K562 (cell line): ENCODE measurements at regions of chr1 and their contacts with region 1.

Region 1: DNA sequence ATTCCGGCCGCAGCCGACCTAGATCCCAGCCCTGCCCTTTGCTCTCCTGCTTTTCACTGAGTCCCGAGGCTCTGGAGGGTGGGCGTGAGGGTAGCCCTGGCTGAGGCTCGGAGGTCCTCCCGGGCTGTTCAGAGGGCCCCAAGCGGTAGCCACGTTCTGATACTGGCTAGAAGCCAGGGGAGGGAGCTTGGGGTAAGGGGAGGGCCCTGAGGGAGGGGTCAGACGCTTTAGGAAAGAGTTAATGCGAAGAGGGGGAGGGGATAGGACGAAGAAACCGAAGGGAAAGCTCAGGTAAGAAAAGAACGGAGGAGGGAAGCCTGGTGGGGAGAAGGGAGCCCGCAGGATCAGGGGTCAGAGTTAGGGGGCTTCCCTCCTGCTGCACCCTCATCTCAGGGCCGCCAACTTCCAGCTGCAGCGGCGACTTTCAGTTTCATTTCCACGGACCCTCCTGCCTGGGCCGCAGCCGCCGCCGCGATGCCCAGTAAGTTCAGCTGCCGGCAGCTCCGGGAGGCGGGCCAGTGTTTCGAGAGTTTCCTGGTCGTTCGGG is at the start of gene MOV10:
- DNase-seq: peak; percentile 85 to 92 (median 90)
- ATAC-seq: peak; percentile 79
- H3K4me3 ChIP-seq: peak within 1 kb of the TSS; percentile 71
- H3K27ac ChIP-seq: peak within 1 kb of the TSS; percentile 86
- H3K4me1 ChIP-seq: peaks cover 18 to 42% of the 10 kb centered on the region in 2 experiments
- H3K27me3 ChIP-seq: no peaks in the 10 kb centered on the region
- CTCF ChIP-seq: no peak
- EP300 ChIP-seq: no peak
- POLR2A ChIP-seq: peak; percentile 87
- RAD21 ChIP-seq: 0 out of 4 replicates have a peak, but pooled peaks of 1 of the 2 experiments have one; percentile 7
- polyA plus RNA-seq, gene MOV10: 16.7 to 39.6 TPM

Region 2: DNA sequence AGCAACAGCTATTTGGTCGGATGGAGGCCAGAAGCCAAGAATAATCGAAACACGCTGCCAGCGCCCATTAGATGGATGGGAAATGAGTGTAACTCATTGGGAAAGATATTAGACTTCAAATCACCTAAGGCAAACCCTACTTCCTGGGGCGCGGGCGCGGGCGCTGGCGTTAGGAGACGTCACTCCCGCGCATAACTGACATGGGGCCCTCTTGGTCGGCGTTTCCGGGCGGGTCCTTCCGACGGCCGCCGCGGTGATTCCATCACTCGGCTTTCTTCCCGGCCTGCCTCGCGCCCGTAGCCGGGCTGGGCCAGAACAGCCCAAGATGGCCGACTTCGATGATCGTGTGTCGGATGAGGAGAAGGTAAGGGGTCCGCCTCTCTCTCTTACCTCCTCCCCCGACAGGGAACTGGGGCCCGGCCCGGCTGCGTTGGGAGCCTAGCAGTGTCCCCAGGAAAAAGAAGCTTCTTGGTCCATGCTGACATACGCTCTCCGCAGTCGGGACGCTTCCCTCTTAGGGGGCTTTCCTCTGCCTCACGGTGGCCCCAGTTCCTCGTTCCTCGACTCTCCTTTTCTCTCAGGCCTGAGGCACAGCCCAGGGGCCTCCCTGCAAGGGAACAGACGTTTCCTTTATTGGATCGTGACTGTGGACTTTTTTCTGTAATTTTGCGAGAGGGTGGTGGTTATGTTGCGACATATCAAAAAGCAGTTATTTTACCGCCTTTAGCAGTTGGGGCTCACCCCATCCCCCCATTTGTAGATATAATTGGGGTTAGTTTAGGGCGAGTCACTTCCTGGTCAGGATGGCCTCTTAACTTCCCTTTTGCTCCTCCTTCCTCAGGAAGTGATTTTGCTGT is 54.8 kb before region 1 on chr1 and contains the start of gene CAPZA1:
- CTCF ChIA-PET with region 1: no interaction called
- POLR2A ChIA-PET with region 1: interaction called, 11 read pairs
- in situ Hi-C with region 1: no loop called
- intact Hi-C with region 1: loop called (anchors 1 kb)
- DNase-seq: peak; percentile 86 to 97 (median 90)
- ATAC-seq: peak; percentile 90
- H3K4me3 ChIP-seq: peak within 1 kb of the TSS; percentile 79
- H3K27ac ChIP-seq: peak within 1 kb of the TSS; percentile 99
- H3K4me1 ChIP-seq: peaks cover 6 to 16% of the 10 kb centered on the region in 2 experiments
- H3K27me3 ChIP-seq: no peaks in the 10 kb centered on the region
- CTCF ChIP-seq: no peak
- EP300 ChIP-seq: peak; percentile 82
- POLR2A ChIP-seq: peak; percentile 98
- RAD21 ChIP-seq: no peak; a peak in 1 of 4 replicates
- polyA plus RNA-seq, gene CAPZA1: 805 to 1,020 TPM

Region 3: DNA sequence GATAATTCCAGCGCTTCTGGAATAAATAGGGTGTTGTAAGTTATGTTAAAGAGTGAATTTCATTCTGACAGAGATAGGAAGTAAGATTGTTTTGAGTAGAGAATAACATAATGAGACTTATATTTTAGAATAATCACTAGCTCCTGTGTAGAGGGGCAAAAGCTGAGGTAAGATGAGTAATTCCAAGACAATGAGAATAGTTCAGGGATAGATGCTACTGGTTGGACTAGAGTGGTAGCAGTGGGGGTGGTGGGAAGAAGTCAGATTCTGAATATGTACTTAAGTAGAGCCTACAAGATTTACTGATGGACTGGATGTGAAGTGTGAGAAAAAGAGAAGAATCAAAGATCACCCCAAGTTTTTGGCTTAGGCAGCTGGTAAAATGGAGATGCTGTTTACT is 23.3 kb before region 1 on chr1:
- CTCF ChIA-PET with region 1: no interaction called
- POLR2A ChIA-PET with region 1: interaction called, 32 read pairs
- in situ Hi-C with region 1: no loop called
- intact Hi-C with region 1: no loop called
- DNase-seq: no peak
- ATAC-seq: no peak
- H3K4me3 ChIP-seq: no peak overlapping the region
- H3K27ac ChIP-seq: no peak overlapping the region
- H3K4me1 ChIP-seq: no peaks in the 10 kb centered on the region
- H3K27me3 ChIP-seq: no peaks in the 10 kb centered on the region
- CTCF ChIP-seq: no peak
- EP300 ChIP-seq: no peak
- POLR2A ChIP-seq: no peak
- RAD21 ChIP-seq: no peak

Region 4: GRCh38 chr1:112660072-112660471 is 14.4 kb before region 1 on chr1:
- CTCF ChIA-PET with region 1: interaction called, 3 read pairs
- POLR2A ChIA-PET with region 1: interaction called, 87 read pairs
- in situ Hi-C with region 1: no loop called
- intact Hi-C with region 1: no loop called
- DNase-seq: no peak
- ATAC-seq: no peak
- H3K4me3 ChIP-seq: no peak overlapping the region
- H3K27ac ChIP-seq: no peak overlapping the region
- H3K4me1 ChIP-seq: no peaks in the 10 kb centered on the region
- H3K27me3 ChIP-seq: no peaks in the 10 kb centered on the region
- CTCF ChIP-seq: no peak
- EP300 ChIP-seq: no peak
- POLR2A ChIP-seq: no peak
- RAD21 ChIP-seq: no peak

Region 5: DNA sequence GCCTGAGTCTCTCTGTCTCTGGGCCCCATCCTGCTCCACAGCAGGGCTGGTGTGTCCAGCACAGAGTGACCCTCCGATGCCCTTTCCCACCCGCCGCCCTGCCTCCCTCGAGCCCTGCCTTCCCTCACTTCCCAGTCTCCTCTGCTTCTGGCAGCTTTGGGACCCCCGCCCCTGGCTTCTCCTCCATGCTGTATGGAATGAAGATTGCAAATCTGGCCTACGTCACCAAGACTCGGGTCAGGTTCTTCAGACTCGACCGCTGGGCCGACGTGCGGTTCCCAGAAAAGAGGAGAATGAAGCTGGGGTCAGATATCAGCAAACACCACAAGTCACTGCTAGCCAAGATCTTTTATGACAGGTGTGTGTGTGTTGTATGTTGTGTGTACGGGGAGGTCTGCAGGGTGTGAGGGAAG is 14.3 kb after region 1 on chr1:
- CTCF ChIA-PET with region 1: no interaction called
- POLR2A ChIA-PET with region 1: interaction called, 104 read pairs
- in situ Hi-C with region 1: no loop called
- intact Hi-C with region 1: no loop called
- DNase-seq: peak in 1 of 4 experiments; percentile 67
- ATAC-seq: peak; percentile 54
- H3K4me3 ChIP-seq: no peak overlapping the region
- H3K27ac ChIP-seq: no peak overlapping the region
- H3K4me1 ChIP-seq: peaks cover 18% of the 10 kb centered on the region in 2 experiments; a peak in 4 of 5 replicates
- H3K27me3 ChIP-seq: no peaks in the 10 kb centered on the region
- CTCF ChIP-seq: no peak
- EP300 ChIP-seq: no peak
- POLR2A ChIP-seq: no peak
- RAD21 ChIP-seq: no peak

Region 6: DNA sequence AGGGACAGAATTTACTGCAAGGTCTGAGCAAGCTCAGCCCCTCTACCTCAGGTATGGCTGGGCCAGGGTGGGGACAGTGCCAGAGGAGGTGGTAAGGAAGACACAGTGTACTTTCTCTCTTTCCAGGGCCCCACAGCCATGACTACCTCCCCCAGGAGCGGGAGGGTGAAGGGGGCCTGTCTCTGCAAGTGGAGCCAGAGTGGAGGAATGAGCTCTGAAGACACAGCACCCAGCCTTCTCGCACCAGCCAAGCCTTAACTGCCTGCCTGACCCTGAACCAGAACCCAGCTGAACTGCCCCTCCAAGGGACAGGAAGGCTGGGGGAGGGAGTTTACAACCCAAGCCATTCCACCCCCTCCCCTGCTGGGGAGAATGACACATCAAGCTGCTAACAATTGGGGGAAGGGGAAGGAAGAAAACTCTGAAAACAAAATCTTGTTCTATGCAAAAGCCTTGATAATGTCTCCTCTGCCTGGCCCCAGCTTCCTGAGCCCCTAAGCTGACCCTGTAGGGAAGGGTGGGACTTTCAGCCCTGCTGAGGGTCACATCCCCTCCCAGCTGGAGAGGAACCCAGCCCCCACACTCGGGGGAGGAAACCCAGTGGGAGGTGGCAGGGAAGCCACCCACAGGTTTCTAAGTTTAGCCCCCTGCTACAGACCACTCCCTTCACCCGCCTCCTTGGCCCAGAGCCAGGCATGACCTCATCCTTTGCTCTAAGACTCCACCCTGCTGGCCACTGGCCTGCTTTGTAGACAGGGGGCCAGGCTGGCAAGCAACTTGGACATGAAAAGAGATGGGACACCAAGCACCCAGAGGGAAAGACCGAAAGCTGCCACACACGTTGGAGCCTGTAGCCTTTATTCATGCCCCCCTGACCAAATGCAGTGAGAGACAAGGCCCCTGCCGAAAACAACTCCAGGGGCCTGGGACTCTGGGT is 26.0 kb after region 1 on chr1:
- CTCF ChIA-PET with region 1: no interaction called
- POLR2A ChIA-PET with region 1: interaction called, 104 read pairs
- in situ Hi-C with region 1: no loop called
- intact Hi-C with region 1: no loop called
- DNase-seq: peak; percentile 94 to 100 (median 96)
- ATAC-seq: peak; percentile 77
- H3K4me3 ChIP-seq: peak overlapping the region; percentile 4; the same call in 1 of the 2 replicates
- H3K27ac ChIP-seq: peak overlapping the region; percentile 97
- H3K4me1 ChIP-seq: peaks cover 87 to 89% of the 10 kb centered on the region in 2 experiments
- H3K27me3 ChIP-seq: no peaks in the 10 kb centered on the region
- CTCF ChIP-seq: peak in 2 of 3 experiments; percentile 30 to 35; a peak in 3 of 6 replicates
- EP300 ChIP-seq: peak; percentile 88
- POLR2A ChIP-seq: peak; percentile 77
- RAD21 ChIP-seq: no peak; a peak in 2 of 4 replicates

Region 7: GRCh38 chr1:112706908-112707663 is 32.6 kb after region 1 on chr1 and contains the start of gene RHOC:
- CTCF ChIA-PET with region 1: interaction called, 15 read pairs
- POLR2A ChIA-PET with region 1: interaction called, 42 read pairs
- in situ Hi-C with region 1: no loop called
- intact Hi-C with region 1: loop called (anchors 1 kb)
- DNase-seq: peak; percentile 90 to 96 (median 94)
- ATAC-seq: peak; percentile 83
- H3K4me3 ChIP-seq: peak within 1 kb of the TSS; percentile 94
- H3K27ac ChIP-seq: peak within 1 kb of the TSS; percentile 97
- H3K4me1 ChIP-seq: peaks cover 44 to 47% of the 10 kb centered on the region in 2 experiments
- H3K27me3 ChIP-seq: no peaks in the 10 kb centered on the region
- CTCF ChIP-seq: peak; percentile 96 to 97 (median 96)
- EP300 ChIP-seq: peak; percentile 29; the same call in 1 of the 2 replicates
- POLR2A ChIP-seq: peak; percentile 76
- RAD21 ChIP-seq: peak; percentile 98 to 99
- polyA plus RNA-seq, gene RHOC: 35.2 to 82.7 TPM